Activated naive CD8-positive, alpha-beta T cell treated with anti-CD3 and anti-CD28 coated beads, Interleukin-2, amount 10 ng/mL, durations not matched to agents 7 days and 5 days (primary cell): ENCODE measurements at regions of chr17 and their contacts with region 1.

Region 1: GRCh38 chr17:40598663-40599467 is 33.6 kb upstream of the CCR7 start:
- DNase-seq: no peak
- ATAC-seq: peak; percentile 23
- H3K4me3 Mint-ChIP-seq: peak overlapping the region; percentile 79
- H3K27ac Mint-ChIP-seq: peak overlapping the region; percentile 98
- H3K4me1 Mint-ChIP-seq: peaks cover 77% of the 10 kb centered on the region
- H3K27me3 Mint-ChIP-seq: no peaks in the 10 kb centered on the region

Region 2: GRCh38 chr17:40548982-40549685 is 49.7 kb before region 1 on chr17:
- POLR2A ChIA-PET with region 1: interaction called, 45 read pairs
- DNase-seq: peak; percentile 36
- ATAC-seq: no peak
- H3K4me3 Mint-ChIP-seq: peak overlapping the region; percentile 53
- H3K27ac Mint-ChIP-seq: peak overlapping the region; percentile 83
- H3K4me1 Mint-ChIP-seq: peaks cover 80% of the 10 kb centered on the region
- H3K27me3 Mint-ChIP-seq: no peaks in the 10 kb centered on the region

Region 3: GRCh38 chr17:40582328-40582901 is 16.4 kb before region 1 on chr17:
- POLR2A ChIA-PET with region 1: interaction called, 31 read pairs
- DNase-seq: peak; percentile 76
- ATAC-seq: peak; percentile 87
- H3K4me3 Mint-ChIP-seq: peak overlapping the region; percentile 75
- H3K27ac Mint-ChIP-seq: peak overlapping the region; percentile 95
- H3K4me1 Mint-ChIP-seq: peaks cover 73% of the 10 kb centered on the region
- H3K27me3 Mint-ChIP-seq: no peaks in the 10 kb centered on the region

Region 4: DNA sequence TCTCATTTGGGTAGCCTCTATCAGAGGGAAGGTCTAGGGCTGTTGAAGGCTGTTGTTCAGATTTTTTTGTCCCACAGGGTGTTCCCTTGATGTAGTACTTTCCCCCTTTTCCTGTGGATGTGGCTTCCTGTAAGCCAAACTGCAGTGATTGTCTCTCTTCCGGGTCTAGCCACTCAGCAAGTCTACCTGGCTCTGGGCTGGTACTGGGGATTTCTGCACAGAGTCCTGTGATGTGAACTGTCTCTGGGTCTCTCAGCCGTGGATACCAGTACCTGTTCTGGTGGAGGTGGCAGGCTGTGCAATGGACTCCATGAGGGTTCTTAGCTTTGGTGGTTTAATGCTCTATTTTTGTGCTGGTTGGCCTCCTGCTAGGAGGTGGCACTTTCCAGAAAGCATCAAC is 10.3 kb before region 1 on chr17:
- POLR2A ChIA-PET with region 1: interaction called, 12 read pairs
- DNase-seq: no peak
- ATAC-seq: no peak
- H3K4me3 Mint-ChIP-seq: peak overlapping the region; percentile 50
- H3K27ac Mint-ChIP-seq: peak overlapping the region; percentile 71
- H3K4me1 Mint-ChIP-seq: peaks cover 52% of the 10 kb centered on the region
- H3K27me3 Mint-ChIP-seq: no peaks in the 10 kb centered on the region

Region 5: GRCh38 chr17:40615295-40615988 is 16.6 kb after region 1 on chr17:
- POLR2A ChIA-PET with region 1: interaction called, 70 read pairs
- DNase-seq: no peak
- ATAC-seq: peak; percentile 39
- H3K4me3 Mint-ChIP-seq: peak overlapping the region; percentile 71
- H3K27ac Mint-ChIP-seq: peak overlapping the region; percentile 94
- H3K4me1 Mint-ChIP-seq: peaks cover 68% of the 10 kb centered on the region
- H3K27me3 Mint-ChIP-seq: no peaks in the 10 kb centered on the region